Activated CD8-positive, alpha-beta memory T cell treated with anti-CD3 and anti-CD28 coated beads, Interleukin-2, amount 10 ng/mL, durations not matched to agents 7 days and 5 days (primary cell): ENCODE measurements at regions of chr19 and their contacts with region 1.

Region 1: GRCh38 chr19:3324321-3324856 is 42.0 kb upstream of the NFIC start:
- DNase-seq: peak; percentile 84
- ATAC-seq: peak; percentile 79
- H3K4me3 Mint-ChIP-seq: no peak overlapping the region
- H3K27ac Mint-ChIP-seq: no peak overlapping the region
- H3K4me1 Mint-ChIP-seq: no peaks in the 10 kb centered on the region
- H3K27me3 Mint-ChIP-seq: no peaks in the 10 kb centered on the region

Region 2: GRCh38 chr19:3285647-3286176 is 38.7 kb before region 1 on chr19:
- CTCF ChIA-PET with region 1: no interaction called
- DNase-seq: no peak
- ATAC-seq: peak; percentile 3
- H3K4me3 Mint-ChIP-seq: no peak overlapping the region
- H3K27ac Mint-ChIP-seq: no peak overlapping the region
- H3K4me1 Mint-ChIP-seq: peaks cover 9% of the 10 kb centered on the region
- H3K27me3 Mint-ChIP-seq: peaks cover 15% of the 10 kb centered on the region

Region 3: DNA sequence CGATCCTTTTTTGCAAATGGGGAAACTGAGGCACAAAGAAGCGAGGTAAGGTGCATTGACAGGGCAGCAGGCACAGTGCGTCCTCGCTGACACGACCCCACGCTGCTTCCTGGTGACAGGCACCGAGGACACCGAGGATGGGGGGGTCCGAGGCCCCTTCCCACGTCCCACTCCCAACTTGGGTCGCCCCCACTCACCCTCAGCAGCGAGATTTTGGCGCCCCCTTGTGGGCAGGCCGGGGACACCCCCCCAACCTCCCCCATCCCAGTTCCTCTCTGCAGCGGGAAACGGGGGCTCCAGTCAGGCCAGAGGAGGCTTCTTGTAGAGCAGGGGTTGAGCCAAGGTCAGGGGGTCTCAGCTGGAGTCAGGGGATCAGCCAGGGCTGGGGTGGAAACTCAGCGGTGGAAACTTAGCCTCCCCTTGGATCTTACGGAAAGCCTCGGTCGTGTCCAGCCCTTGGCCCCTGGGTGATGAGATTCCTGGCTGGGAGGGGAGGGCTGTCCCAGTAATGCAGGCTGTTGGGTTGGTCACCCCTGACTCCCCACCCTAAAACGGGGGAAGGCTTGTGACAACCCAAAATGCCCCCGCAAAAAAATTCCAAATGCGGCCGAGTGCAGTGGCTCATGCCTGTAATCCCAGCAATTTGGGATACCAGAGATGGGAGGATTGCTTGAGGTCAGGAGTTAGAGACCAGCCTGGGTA is 147.7 kb after region 1 on chr19:
- CTCF ChIA-PET with region 1: interaction called, 14 read pairs
- DNase-seq: no peak
- ATAC-seq: no peak
- H3K4me3 Mint-ChIP-seq: no peak overlapping the region
- H3K27ac Mint-ChIP-seq: no peak overlapping the region
- H3K4me1 Mint-ChIP-seq: no peaks in the 10 kb centered on the region
- H3K27me3 Mint-ChIP-seq: no peaks in the 10 kb centered on the region